ENCODE measurements at regions of chr15 and their contacts with region 1.

Region 1: GRCh38 chr15:99282121-99282520 is 30.8 kb downstream of the LRRC28 start:
- DNase-seq: no peak
- ATAC-seq: no peak
- H3K4me3 ChIP-seq: no peak overlapping the region
- H3K27ac ChIP-seq: no peak overlapping the region
- H3K4me1 ChIP-seq: peaks cover 4% of the 10 kb centered on the region
- H3K27me3 ChIP-seq: no peaks in the 10 kb centered on the region

Region 2: DNA sequence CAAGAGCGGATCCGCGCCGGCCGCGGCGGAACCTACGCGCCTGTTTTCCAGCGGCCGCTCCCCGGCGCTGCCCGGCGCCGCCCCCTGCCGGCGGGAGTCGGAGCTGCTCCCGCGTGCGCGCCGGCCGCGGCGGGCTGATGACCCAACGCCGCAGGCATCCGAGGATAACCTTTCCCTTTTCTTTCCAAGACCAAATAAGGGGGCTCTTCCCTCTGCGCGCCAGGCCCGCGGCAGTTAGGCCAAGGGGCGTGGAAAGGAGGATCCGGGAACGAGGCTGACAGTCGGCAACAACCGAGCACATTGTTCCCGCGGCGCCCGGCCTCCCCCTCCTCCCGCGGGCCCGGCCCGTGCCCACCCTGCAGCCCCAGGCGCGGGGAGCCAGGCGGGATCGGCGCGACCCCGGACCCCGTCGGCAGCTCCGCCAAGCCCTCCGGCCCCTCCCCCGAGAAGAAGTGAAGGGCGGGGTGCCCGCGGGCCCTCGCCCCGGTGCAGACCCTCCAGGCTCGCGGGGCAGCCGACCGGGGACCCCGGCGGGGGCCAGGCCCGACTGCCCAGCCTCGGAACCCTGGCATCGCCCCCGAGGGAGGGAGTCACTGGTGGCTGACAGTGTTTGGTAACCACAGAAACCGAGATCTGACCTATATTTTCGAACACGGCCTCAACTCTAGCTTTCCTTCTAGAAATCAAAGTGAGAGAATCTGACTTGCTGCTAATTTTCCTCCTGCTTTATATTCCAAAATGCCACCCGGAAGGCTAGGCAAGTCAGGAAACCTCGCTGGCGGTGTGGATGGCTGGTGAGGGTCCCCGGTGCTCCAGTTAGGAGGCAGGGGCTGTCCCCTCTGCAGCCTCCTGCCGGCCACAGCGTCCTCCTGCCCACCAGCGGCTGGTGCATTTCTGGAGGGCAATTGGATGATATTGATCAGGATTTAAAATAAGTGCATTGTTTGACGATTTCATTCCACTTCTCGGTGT is 222.8 kb before region 1 on chr15:
- intact Hi-C with region 1: no loop called
- DNase-seq: peak; percentile 88 to 93 (median 92)
- ATAC-seq: peak; percentile 90 to 93
- H3K4me3 ChIP-seq: peak overlapping the region; percentile 58
- H3K27ac ChIP-seq: peak overlapping the region; percentile 68
- H3K4me1 ChIP-seq: peaks cover 2% of the 10 kb centered on the region
- H3K27me3 ChIP-seq: no peaks in the 10 kb centered on the region

Region 3: GRCh38 chr15:99361541-99362185 is 79.5 kb after region 1 on chr15:
- intact Hi-C with region 1: loop called in 1 of 4 experiments (anchors 10 kb)
- DNase-seq: no peak
- ATAC-seq: no peak
- H3K4me3 ChIP-seq: no peak overlapping the region
- H3K27ac ChIP-seq: no peak overlapping the region
- H3K4me1 ChIP-seq: no peaks in the 10 kb centered on the region
- H3K27me3 ChIP-seq: no peaks in the 10 kb centered on the region

Region 4: DNA sequence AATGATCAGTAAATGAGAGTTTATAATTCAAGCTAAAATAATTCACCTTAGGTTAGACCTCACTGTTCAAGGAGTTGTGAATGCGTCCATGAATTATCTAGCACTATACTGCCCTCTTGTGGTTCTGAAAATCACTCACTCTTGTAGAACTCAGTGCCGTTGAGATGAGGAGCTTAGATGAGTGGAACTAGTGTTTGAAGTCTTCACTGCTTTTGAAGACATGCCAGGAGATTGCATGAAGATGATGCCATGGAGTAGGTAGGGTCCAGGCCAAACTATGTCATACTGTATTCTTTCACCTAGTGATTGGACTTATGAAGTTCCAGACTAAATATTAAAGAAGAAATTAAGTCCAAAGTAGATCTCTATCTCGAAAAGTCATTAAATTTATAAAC is 422.3 kb after region 1 on chr15:
- intact Hi-C with region 1: loop called in 3 of 4 experiments (anchors 5 to 10 kb)
- DNase-seq: no peak
- ATAC-seq: peak; percentile 71 to 77
- H3K4me3 ChIP-seq: no peak overlapping the region
- H3K27ac ChIP-seq: no peak overlapping the region
- H3K4me1 ChIP-seq: peaks cover 12% of the 10 kb centered on the region
- H3K27me3 ChIP-seq: no peaks in the 10 kb centered on the region

Region 5: DNA sequence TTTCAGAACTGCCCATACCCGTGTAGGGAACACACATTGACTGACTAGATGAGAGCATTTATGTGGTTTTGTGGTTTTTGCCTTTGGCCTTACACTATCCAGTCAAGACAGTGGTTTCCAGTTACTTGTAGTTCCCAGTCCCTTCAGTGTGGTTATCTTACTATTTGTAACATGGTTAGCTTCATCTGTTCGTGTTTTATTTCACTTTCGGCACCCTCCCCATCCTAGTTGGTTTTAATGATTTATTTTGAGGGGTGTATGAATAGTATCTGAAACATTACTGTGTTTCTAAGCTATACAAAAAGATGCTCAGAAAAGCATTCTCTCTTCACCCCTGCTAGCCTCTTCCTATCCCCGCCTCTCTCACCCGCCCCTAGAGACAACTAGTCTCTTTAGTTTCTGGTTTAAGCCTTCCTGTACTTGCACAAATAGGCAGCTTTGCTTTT is 437.0 kb after region 1 on chr15:
- intact Hi-C with region 1: loop called in 1 of 4 experiments (anchors 10 kb)
- DNase-seq: no peak
- ATAC-seq: no peak
- H3K4me3 ChIP-seq: no peak overlapping the region
- H3K27ac ChIP-seq: no peak overlapping the region
- H3K4me1 ChIP-seq: peaks cover 15% of the 10 kb centered on the region
- H3K27me3 ChIP-seq: no peaks in the 10 kb centered on the region

Region 6: DNA sequence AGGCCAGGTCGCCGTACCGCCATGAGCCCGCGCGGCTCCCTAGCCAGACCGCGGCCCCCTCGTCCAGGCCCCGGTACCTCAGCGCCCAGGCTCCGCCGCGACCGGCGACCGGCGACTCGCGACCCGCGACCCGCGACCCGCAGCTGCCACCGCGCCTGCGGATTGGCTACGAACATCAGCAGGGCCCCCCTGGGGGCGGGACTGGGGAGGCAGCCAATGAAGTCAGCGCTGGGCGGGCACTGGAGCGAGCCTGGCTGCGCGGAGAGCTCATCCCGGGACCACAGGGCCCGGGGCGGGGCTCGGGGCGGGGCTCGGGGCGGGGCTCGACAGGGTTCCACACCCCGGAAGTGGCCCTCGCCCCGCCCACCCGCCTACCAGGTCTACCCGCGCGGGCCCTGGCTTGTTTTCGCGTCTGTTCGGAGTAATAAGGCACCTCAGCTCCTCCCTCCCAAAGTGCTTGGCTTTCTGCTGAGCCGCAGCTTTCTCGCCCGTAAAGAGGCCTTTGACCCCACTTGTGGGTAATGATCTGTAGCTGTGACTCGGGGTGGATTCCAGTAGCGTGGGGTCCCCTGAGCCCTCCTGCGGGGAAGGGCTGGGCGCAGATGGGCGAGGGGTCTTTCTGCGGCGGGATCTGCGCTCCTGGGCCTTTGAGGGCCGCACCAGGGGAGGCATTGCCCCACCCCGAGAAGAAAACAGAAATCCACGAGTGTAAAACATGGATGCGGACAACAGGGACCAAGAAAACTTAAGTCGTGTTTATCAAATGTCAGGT is 451.3 kb after region 1 on chr15 and contains the start of gene LYSMD4:
- intact Hi-C with region 1: loop called in 1 of 4 experiments (anchors 10 kb)
- DNase-seq: peak; percentile 98 to 100 (median 100)
- ATAC-seq: peak; percentile 98 to 99
- H3K4me3 ChIP-seq: peak within 1 kb of the TSS; percentile 78
- H3K27ac ChIP-seq: peak within 1 kb of the TSS; percentile 56
- H3K4me1 ChIP-seq: no peaks in the 10 kb centered on the region
- H3K27me3 ChIP-seq: no peaks in the 10 kb centered on the region
- total RNA-seq, gene LYSMD4: 12.6 to 19.3 (median 15.7) TPM